Mammary epithelial cell (primary cell): ENCODE measurements at regions of chr14 and their contacts with region 1.

Region 1: DNA sequence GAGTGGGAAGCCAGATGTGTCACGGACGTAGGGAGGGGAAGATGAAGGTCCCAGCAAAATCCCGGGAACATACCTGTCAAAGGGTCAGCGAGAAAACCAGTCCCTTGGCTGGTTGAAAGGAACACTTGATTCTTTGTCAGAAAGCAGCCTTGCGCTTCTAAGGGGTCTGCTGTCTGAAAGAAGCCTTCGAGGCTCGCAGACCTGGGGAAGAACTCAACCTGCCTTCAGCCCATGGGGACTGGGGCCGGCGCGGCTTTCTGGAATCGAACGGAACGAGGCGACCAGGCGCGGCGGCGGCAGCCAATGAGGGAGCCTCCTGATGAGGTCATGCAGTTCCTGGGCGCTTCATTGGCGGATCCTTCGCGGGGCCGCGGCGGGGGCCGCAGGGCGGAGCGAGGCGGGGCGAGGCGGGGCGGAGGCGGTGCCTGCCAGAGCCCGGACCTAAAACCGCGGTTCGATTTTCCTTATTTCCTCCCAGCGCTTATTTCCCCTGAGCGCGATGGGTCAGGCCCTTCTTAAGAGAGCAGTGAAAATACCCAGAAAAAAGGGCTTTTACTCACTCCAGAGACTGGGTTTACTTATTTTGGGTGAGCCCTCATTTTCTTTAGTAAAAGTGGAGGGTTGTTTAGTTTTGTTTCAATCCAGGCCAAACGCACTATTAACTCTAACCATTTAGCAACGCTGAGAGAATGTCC is 11.8 kb upstream of the TTC7B start:
- DNase-seq: peak; percentile 80
- H3K4me3 ChIP-seq: peak overlapping the region; percentile 11 to 42 (median 21)
- H3K27ac ChIP-seq: no peak overlapping the region
- H3K4me1 ChIP-seq: peaks cover 11% of the 10 kb centered on the region
- H3K27me3 ChIP-seq: no peaks in the 10 kb centered on the region
- CTCF ChIP-seq: no peak

Region 2: GRCh38 chr14:90767899-90768298 is 60.2 kb before region 1 on chr14:
- CTCF ChIA-PET with region 1: no interaction called
- dilution Hi-C with region 1: loop called (anchors 5 kb)
- in situ Hi-C with region 1: no loop called
- intact Hi-C with region 1: no loop called
- DNase-seq: no peak
- H3K4me3 ChIP-seq: no peak overlapping the region
- H3K27ac ChIP-seq: no peak overlapping the region
- H3K4me1 ChIP-seq: no peaks in the 10 kb centered on the region
- H3K27me3 ChIP-seq: no peaks in the 10 kb centered on the region
- CTCF ChIP-seq: no peak

Region 3: GRCh38 chr14:90871605-90872233 is 43.7 kb after region 1 on chr14:
- CTCF ChIA-PET with region 1: no interaction called
- dilution Hi-C with region 1: loop called (anchors 5 kb)
- in situ Hi-C with region 1: no loop called
- intact Hi-C with region 1: no loop called
- DNase-seq: peak; percentile 84
- H3K4me3 ChIP-seq: peak overlapping the region in 1 of 3 experiments; percentile 43
- H3K27ac ChIP-seq: peak overlapping the region; percentile 61
- H3K4me1 ChIP-seq: peaks cover 22% of the 10 kb centered on the region
- H3K27me3 ChIP-seq: no peaks in the 10 kb centered on the region
- CTCF ChIP-seq: peak in 1 of 2 donors; percentile 1